ENCODE measurements at regions of chr5 and their contacts with region 1.

Region 1: DNA sequence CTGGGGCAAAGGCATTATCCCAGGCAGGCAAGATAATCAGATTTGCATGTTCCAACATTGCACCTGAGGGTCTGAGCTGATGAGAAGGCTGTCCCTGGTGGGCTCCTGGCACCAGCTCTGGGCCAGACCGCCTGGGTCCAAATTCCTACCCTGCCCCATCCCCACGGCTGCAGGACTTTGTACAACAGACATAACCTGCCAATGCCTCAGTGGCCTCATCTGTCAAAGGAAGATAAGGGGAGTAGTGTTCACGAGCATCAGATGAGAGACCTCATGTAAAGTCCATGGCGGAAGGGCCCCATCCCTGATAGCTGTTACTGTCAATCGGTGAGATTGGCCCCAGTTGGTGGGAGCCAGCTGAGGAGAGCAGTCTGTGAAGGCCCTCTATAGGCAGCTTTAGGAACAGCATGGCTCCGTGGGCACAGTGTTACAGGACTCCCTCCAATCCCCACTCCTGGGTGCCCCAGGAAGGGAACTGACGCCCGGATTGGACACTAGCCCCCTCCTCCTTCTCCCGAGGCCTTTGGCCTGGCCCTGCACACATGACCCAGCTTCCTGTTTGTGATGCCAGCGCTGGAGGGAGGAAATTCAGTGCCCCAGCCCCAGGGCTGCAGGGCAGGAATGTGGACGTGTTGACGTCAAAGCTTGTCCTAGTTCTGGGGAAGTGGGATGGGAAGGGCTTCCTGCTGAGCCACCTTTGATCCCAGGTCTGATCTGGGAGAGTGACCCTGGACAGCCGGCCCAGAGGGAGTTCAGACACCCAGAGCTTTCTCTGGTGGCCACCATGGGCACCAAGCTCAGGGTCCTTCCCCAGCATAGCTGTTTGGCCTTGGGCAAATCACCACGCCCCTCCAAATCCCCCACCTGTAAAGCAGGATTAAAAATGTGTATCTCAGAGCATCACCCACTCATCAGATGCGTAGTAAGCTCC is 56.2 kb downstream of the DUSP1 start:
- DNase-seq: no peak
- H3K4me3 ChIP-seq: no peak overlapping the region
- H3K27ac ChIP-seq: no peak overlapping the region
- H3K27me3 ChIP-seq: no peaks in the 10 kb centered on the region
- CTCF ChIP-seq: peak; percentile 92

Region 2: GRCh38 chr5:172697123-172698121 is 17.3 kb before region 1 on chr5:
- CTCF ChIA-PET with region 1: interaction called, 14 read pairs
- POLR2A ChIA-PET with region 1: no interaction called
- DNase-seq: peak; percentile 63
- H3K4me3 ChIP-seq: peak overlapping the region; percentile 72
- H3K27ac ChIP-seq: peak overlapping the region; percentile 21
- H3K27me3 ChIP-seq: peaks cover 24% of the 10 kb centered on the region
- CTCF ChIP-seq: peak; percentile 91

Region 3: GRCh38 chr5:172897481-172898217 is 182.9 kb after region 1 on chr5:
- CTCF ChIA-PET with region 1: interaction called, 10 read pairs
- POLR2A ChIA-PET with region 1: interaction called, 5 read pairs
- DNase-seq: peak; percentile 83
- H3K4me3 ChIP-seq: no peak overlapping the region
- H3K27ac ChIP-seq: peak overlapping the region; percentile 99
- H3K27me3 ChIP-seq: no peaks in the 10 kb centered on the region
- CTCF ChIP-seq: no peak

Region 4: GRCh38 chr5:172926796-172927195 is 212.0 kb after region 1 on chr5:
- CTCF ChIA-PET with region 1: interaction called, 157 read pairs
- POLR2A ChIA-PET with region 1: interaction called, 4 read pairs
- DNase-seq: no peak
- H3K4me3 ChIP-seq: no peak overlapping the region
- H3K27ac ChIP-seq: no peak overlapping the region
- H3K27me3 ChIP-seq: no peaks in the 10 kb centered on the region
- CTCF ChIP-seq: no peak

Region 5: DNA sequence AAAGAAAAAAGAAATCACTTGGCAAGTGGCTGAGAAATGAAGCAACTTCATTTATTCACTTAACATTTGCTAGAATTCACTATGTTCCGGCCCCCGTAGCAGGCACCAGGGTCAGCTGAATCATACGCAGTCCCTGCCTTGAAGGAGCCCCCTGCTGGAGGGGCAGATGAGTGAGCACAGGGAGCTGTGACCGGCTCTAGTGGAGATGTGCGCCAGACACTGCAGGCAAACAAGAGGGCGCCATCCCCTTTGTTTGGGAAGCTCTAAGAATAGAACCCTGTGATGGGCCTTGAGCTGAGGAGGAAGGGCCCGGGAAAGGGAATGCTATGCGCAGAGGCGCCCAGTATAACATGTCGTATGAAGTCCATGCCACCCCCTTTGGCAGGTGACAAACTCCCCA is 224.3 kb after region 1 on chr5:
- CTCF ChIA-PET with region 1: interaction called, 157 read pairs
- POLR2A ChIA-PET with region 1: no interaction called
- DNase-seq: no peak
- H3K4me3 ChIP-seq: no peak overlapping the region
- H3K27ac ChIP-seq: no peak overlapping the region
- H3K27me3 ChIP-seq: no peaks in the 10 kb centered on the region
- CTCF ChIP-seq: peak; percentile 47

Region 6: GRCh38 chr5:172984243-172984953 is 269.6 kb after region 1 on chr5:
- CTCF ChIA-PET with region 1: interaction called, 10 read pairs
- POLR2A ChIA-PET with region 1: no interaction called
- DNase-seq: peak; percentile 76
- H3K4me3 ChIP-seq: peak overlapping the region; percentile 96
- H3K27ac ChIP-seq: peak overlapping the region; percentile 95
- H3K27me3 ChIP-seq: no peaks in the 10 kb centered on the region
- CTCF ChIP-seq: peak; percentile 83